ENCODE measurements at regions of chr1 and their contacts with region 1.

Region 1: DNA sequence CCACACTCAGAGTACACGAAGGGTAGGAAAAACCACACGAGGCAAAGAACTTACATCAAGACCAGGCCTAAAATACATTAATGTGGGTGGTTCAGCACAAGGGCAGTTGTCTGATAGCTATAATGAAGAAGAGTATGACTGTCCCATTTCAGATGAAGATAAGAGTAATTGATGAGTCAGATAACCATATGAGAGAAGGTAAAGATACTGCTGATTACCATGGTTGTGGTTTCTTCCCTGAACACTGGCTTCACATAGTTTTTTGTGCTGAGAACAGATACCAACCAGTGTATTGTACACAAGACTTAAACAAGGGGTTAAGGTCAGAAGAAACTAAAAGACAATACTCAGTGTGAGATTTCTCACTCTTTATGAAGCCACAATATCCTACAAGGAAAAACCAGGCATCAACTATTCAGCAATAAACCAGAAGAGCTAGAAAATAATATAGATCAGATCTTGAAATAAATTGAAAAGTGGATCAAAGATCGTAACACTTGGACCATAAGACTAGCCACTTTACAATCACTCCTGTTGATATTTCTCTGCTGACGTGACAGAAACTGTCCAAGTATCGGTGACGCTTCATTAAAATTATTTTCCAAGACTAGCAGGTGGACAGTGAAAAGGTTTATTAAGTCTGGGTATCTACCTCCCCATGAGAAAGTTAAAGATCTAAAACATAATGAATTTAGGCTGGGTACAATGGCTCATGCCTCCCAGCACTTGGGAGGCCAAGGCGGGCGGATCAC is 28.6 kb downstream of the PUM1 start:
- DNase-seq: no peak
- H3K4me3 Mint-ChIP-seq: no peak overlapping the region
- H3K27ac Mint-ChIP-seq: peak overlapping the region; percentile 38
- H3K4me1 Mint-ChIP-seq: peaks cover 37% of the 10 kb centered on the region
- H3K27me3 Mint-ChIP-seq: no peaks in the 10 kb centered on the region

Region 2: DNA sequence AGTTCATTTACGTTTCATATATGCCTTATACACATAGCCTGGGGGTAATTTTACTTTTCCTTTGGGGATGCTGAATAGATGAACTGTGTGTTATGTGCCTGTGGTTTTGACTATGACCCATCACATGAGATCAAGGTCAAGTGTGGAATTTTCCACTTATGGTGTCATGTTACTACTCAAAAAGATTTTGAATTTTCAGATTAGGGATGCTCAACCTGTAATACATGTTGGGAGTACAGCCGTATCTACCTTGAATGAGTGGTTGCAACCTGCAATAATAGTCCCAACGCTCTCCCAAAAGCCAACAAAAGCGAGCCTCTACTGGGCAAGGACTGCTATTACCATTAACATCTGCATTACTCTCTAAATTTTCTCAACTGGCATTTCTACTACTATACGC is 59.8 kb before region 1 on chr1:
- CTCF ChIA-PET with region 1: no interaction called
- POLR2A ChIA-PET with region 1: no interaction called
- DNase-seq: no peak
- H3K4me3 Mint-ChIP-seq: no peak overlapping the region
- H3K27ac Mint-ChIP-seq: peak overlapping the region; percentile 69
- H3K4me1 Mint-ChIP-seq: peaks cover 31% of the 10 kb centered on the region
- H3K27me3 Mint-ChIP-seq: no peaks in the 10 kb centered on the region

Region 3: GRCh38 chr1:31010086-31010989 is 26.6 kb before region 1 on chr1:
- CTCF ChIA-PET with region 1: no interaction called
- POLR2A ChIA-PET with region 1: interaction called, 13 read pairs
- DNase-seq: no peak
- H3K4me3 Mint-ChIP-seq: no peak overlapping the region
- H3K27ac Mint-ChIP-seq: peak overlapping the region; percentile 65
- H3K4me1 Mint-ChIP-seq: peaks cover 59% of the 10 kb centered on the region
- H3K27me3 Mint-ChIP-seq: no peaks in the 10 kb centered on the region

Region 4: DNA sequence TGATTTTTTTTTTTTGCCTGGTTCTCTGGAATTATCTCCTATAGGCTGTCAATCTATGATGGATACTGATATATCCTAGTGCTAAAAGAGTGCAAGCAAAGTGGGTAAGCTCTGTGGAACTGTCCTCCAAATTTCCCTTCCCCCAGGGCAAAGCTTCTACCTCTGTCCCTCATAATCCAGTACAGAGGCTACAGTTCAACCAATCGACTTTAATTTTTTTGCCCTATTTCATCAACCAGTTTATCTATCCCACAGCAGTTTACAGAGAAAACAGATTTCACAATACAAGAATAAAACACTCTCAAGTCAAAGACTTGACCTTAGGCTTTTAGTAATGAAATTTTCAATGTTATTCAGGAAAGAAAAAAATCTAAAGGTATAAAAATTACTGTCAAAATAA is 14.7 kb after region 1 on chr1:
- CTCF ChIA-PET with region 1: no interaction called
- POLR2A ChIA-PET with region 1: no interaction called
- DNase-seq: no peak
- H3K4me3 Mint-ChIP-seq: no peak overlapping the region
- H3K27ac Mint-ChIP-seq: no peak overlapping the region
- H3K4me1 Mint-ChIP-seq: peaks cover 40% of the 10 kb centered on the region
- H3K27me3 Mint-ChIP-seq: no peaks in the 10 kb centered on the region

Region 5: GRCh38 chr1:31065310-31066217 is 28.6 kb after region 1 on chr1 and contains the start of gene PUM1:
- CTCF ChIA-PET with region 1: no interaction called
- POLR2A ChIA-PET with region 1: interaction called, 10 read pairs
- DNase-seq: peak; percentile 99
- H3K4me3 Mint-ChIP-seq: peak within 1 kb of the TSS; percentile 96
- H3K27ac Mint-ChIP-seq: peak within 1 kb of the TSS; percentile 96
- H3K4me1 Mint-ChIP-seq: peaks cover 26% of the 10 kb centered on the region
- H3K27me3 Mint-ChIP-seq: no peaks in the 10 kb centered on the region
- total RNA-seq, gene PUM1: 86.8 to 87.4 TPM

Region 6: GRCh38 chr1:31152181-31152798 is 115.4 kb after region 1 on chr1:
- CTCF ChIA-PET with region 1: no interaction called
- POLR2A ChIA-PET with region 1: no interaction called
- DNase-seq: no peak
- H3K4me3 Mint-ChIP-seq: no peak overlapping the region
- H3K27ac Mint-ChIP-seq: no peak overlapping the region
- H3K4me1 Mint-ChIP-seq: peaks cover 9% of the 10 kb centered on the region
- H3K27me3 Mint-ChIP-seq: no peaks in the 10 kb centered on the region

Measured in activated CD4-positive, alpha-beta memory T cell treated with anti-CD3 and anti-CD28 coated beads, Interleukin-2, amount 10 ng/mL, durations not matched to agents 7 days and 5 days (primary cell).